HEK293 (cell line): ENCODE measurements at regions of chr22 and their contacts with region 1.

Region 1: GRCh38 chr22:40487663-40488249 is 117.4 kb downstream of the SGSM3 start:
- H3K4me3 ChIP-seq: no peak overlapping the region
- H3K27ac ChIP-seq: no peak overlapping the region
- H3K4me1 ChIP-seq: no peaks in the 10 kb centered on the region
- CTCF ChIP-seq: peak; percentile 52; the same call in 1 of the 2 replicates

Region 2: DNA sequence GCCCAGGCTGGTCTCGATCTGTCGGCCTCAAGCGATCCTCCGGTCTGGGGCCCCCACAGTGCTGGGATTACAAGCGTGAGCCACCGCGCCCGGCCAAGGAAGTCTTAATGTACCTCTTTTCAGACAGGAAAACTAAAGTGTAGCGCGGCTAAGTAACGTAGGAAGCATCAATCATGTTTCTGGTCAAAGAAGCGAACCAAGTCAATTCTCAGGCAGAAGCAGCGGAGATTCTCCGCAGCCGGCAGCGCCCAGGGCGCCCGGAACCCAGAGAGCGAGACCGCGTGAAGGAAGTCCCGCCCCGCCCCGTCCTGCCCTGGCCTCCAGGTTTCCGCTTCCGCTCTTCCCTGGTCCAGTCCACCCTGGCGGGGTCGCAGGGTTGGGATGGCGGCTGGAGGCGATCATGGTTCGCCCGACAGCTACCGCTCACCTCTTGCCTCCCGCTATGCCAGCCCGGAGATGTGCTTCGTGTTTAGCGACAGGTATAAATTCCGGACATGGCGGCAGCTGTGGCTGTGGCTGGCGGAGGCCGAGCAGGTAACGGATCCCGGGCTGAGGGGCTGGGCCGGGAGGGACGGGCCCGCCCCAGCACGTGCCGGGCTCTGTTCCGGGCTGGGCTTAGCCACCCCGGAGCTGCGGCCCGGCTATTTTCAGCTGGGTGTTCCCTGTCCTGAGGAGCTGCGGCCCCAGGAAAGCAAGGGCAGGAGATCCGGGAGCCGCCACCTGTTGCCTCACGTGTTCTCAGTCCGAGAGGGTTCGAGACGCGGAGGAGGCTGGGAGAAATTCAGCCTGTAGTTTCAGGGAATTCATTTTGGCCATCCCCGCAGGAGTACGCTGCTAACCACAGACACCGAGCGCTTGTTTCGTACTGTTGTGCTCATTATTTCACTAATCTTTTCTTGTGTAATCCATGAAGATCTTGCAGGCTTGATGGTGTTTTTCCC is 141.3 kb before region 1 on chr22 and contains the start of gene ADSL:
- CTCF ChIA-PET with region 1: no interaction called
- POLR2A ChIA-PET with region 1: no interaction called
- H3K4me3 ChIP-seq: peak within 1 kb of the TSS; percentile 92
- H3K27ac ChIP-seq: peak within 1 kb of the TSS; percentile 92
- H3K4me1 ChIP-seq: peaks cover 5% of the 10 kb centered on the region; the same call in 1 of the 2 replicates
- CTCF ChIP-seq: peak; percentile 57; the same call in 1 of the 2 replicates

Region 3: GRCh38 chr22:40499187-40499753 is 11.5 kb after region 1 on chr22:
- CTCF ChIA-PET with region 1: interaction called, 28 read pairs
- POLR2A ChIA-PET with region 1: no interaction called
- H3K4me3 ChIP-seq: no peak overlapping the region
- H3K27ac ChIP-seq: peak overlapping the region; percentile 58; the same call in 1 of the 2 replicates
- H3K4me1 ChIP-seq: peaks cover 14% of the 10 kb centered on the region
- CTCF ChIP-seq: no peak

Region 4: GRCh38 chr22:40507491-40507890 is 19.7 kb after region 1 on chr22:
- CTCF ChIA-PET with region 1: interaction called, 14 read pairs
- POLR2A ChIA-PET with region 1: no interaction called
- H3K4me3 ChIP-seq: no peak overlapping the region
- H3K27ac ChIP-seq: no peak overlapping the region
- H3K4me1 ChIP-seq: peaks cover 46% of the 10 kb centered on the region
- CTCF ChIP-seq: no peak

Region 5: GRCh38 chr22:40525249-40525884 is 37.6 kb after region 1 on chr22:
- CTCF ChIA-PET with region 1: interaction called, 12 read pairs
- POLR2A ChIA-PET with region 1: no interaction called
- H3K4me3 ChIP-seq: no peak overlapping the region
- H3K27ac ChIP-seq: no peak overlapping the region
- H3K4me1 ChIP-seq: peaks cover 7% of the 10 kb centered on the region; the same call in 1 of the 2 replicates
- CTCF ChIP-seq: no peak

Region 6: DNA sequence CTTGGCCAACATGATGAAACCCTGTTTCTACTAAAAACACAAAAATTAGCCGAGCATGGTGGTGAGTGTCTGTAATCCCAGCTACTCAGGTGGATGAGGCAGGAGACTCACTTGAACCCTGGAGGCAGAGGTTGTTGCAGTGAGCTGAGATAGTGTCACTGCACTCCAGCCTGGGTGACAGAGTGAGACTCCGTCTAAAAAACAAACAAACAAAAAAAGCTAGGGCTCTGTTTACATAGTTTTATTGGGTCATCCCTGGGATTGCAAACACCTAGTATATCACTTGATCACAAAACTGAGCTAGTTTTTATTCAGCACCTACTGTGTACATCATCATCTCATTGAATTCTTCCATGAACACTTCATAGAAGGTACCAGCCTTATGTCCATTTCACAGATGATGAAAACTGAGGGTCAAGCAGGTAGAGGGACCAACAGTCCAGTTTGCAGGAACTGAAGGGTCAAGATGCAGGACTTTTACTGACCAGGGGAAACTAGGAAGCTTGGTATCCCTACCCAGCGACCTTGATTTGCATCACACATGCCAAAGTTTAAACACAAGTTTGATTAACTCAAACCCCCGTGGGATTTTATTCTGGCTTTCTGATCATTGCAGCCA is 157.9 kb after region 1 on chr22:
- CTCF ChIA-PET with region 1: interaction called, 21 read pairs
- POLR2A ChIA-PET with region 1: no interaction called
- H3K4me3 ChIP-seq: no peak overlapping the region
- H3K27ac ChIP-seq: no peak overlapping the region
- H3K4me1 ChIP-seq: peaks cover 3% of the 10 kb centered on the region; the same call in 1 of the 2 replicates
- CTCF ChIP-seq: no peak